Activated T-helper 2 cell treated with anti-CD3 and anti-CD28 coated beads, Interferon-gamma antibody, Interleukin-2, Interleukin-4, amounts not matched to agents 10 μg/mL and 5 μg/mL and 100 μg/mL, durations not matched to agents 14 hours and 24 hours and 36 hours (primary cell): ENCODE measurements at regions of chr12 and their contacts with region 1.

Region 1: GRCh38 chr12:32025906-32026305 is 66.7 kb downstream of the RESF1 start:
- DNase-seq: peak; percentile 61
- H3K4me3 Mint-ChIP-seq: no peak overlapping the region
- H3K27ac Mint-ChIP-seq: peak overlapping the region; percentile 66
- H3K4me1 Mint-ChIP-seq: peaks cover 23% of the 10 kb centered on the region
- H3K27me3 Mint-ChIP-seq: no peaks in the 10 kb centered on the region

Region 2: GRCh38 chr12:31728917-31729640 is 296.8 kb before region 1 on chr12 and contains the start of gene AMN1:
- intact Hi-C with region 1: loop called (anchors 5 kb)
- DNase-seq: peak; percentile 100
- H3K4me3 Mint-ChIP-seq: peak within 1 kb of the TSS; percentile 98
- H3K27ac Mint-ChIP-seq: peak within 1 kb of the TSS; percentile 99
- H3K4me1 Mint-ChIP-seq: peaks cover 35% of the 10 kb centered on the region
- H3K27me3 Mint-ChIP-seq: no peaks in the 10 kb centered on the region
- total RNA-seq, gene AMN1: 1.8 and 2.8 TPM in 2 replicates

Region 3: GRCh38 chr12:31989571-31990362 is 36.1 kb before region 1 on chr12:
- intact Hi-C with region 1: loop called (anchors 2 kb)
- DNase-seq: no peak
- H3K4me3 Mint-ChIP-seq: peak overlapping the region; percentile 5
- H3K27ac Mint-ChIP-seq: peak overlapping the region; percentile 69
- H3K4me1 Mint-ChIP-seq: peaks cover 41% of the 10 kb centered on the region
- H3K27me3 Mint-ChIP-seq: no peaks in the 10 kb centered on the region

Region 4: DNA sequence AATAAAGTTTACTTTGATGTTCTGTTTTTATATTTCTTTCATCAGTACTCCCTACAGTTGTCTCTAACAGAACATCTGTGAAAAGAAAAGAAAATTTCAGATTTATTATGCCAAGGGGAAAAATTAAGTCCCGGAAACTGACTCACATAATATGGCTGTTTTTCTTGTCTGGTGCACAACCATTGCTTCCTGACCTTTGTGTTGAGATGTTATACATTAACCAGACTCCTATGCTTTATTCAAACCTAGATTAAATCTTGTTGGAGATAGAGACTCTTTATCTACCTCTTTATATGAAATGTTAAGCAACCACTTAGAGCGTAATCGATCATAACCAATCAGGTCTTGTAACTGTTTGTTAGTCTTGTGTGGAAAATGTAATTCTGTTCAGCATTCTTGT is 43.2 kb after region 1 on chr12:
- intact Hi-C with region 1: no loop called
- DNase-seq: no peak
- H3K4me3 Mint-ChIP-seq: no peak overlapping the region
- H3K27ac Mint-ChIP-seq: no peak overlapping the region
- H3K4me1 Mint-ChIP-seq: no peaks in the 10 kb centered on the region
- H3K27me3 Mint-ChIP-seq: peaks cover 5% of the 10 kb centered on the region

Region 5: DNA sequence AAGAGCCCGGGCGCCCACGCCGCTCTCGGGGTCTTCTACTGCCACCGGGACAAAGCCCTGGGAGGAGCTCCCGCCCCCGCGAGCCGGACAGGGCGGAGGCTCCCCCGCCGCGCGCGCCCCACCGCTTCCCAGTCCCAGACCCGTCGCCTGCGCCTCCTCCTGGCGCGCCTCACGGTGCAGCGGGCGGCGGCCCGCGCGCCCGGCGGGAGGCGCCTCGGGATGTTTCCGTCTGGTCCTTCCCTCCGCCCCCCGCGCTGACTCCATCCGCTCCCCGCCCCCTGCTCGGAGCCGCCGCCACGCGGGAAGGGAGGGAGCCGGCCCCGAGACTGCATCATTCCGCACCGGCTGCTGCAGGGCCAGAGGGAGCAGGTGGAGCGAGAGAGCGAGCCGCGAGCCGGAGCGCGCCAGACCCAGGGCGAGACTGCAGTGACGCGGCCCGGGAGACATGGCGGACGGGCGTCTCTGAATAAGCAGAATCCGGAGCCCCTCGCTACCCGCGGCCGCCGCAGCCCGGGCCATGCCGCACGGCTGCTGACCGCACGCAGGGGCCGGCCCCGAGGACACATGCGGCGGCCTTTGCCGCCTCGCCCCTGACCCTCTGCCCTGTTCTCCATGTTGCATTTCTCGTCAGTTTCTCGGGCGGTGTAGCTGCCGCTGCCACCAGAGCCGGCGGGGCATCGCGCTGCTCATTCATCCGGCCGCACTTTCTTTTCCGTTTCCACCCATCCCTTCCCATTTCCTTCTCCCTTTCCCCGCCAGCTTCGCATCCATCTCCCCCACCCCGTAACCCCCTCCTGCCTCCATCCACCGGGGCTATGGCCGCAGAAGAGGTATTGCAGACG is 80.8 kb after region 1 on chr12 and contains the start of gene BICD1:
- intact Hi-C with region 1: no loop called
- DNase-seq: peak; percentile 65
- H3K4me3 Mint-ChIP-seq: peak within 1 kb of the TSS; percentile 91
- H3K27ac Mint-ChIP-seq: peak within 1 kb of the TSS; percentile 81
- H3K4me1 Mint-ChIP-seq: peaks cover 26% of the 10 kb centered on the region
- H3K27me3 Mint-ChIP-seq: peaks cover 16% of the 10 kb centered on the region
- total RNA-seq, gene BICD1: 8.0 and 8.8 TPM in 2 replicates